Mucosa of descending colon (tissue), 3 donors: ENCODE measurements at regions of chr17 and their contacts with region 1.

Region 1: GRCh38 chr17:28125530-28126378 is 83.3 kb downstream of the NLK start:
- DNase-seq: peak in 1 of 3 donors; percentile 32
- ATAC-seq: peak; percentile 79
- H3K4me3 ChIP-seq: no peak overlapping the region
- H3K4me1 ChIP-seq: peaks cover 9% of the 10 kb centered on the region
- CTCF ChIP-seq: no peak

Region 2: DNA sequence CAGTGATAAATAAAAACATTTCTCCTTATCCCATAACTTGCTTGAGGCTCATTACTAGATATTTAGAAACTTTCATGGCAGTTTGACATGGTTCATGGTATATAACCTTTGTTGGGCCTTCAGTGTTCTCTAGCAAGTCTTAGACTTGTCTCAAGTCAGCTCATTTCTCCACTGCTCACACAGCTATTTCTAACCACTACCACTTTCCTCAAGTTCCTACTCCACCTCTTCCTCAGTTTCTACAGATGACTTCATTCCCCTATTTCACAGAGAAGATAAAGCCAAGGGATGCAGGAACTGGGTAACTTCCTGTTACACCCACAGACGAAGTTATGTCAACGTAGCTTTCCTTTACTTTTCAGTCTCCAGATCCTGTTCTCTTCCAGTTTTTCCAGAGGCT is 60.0 kb before region 1 on chr17:
- intact Hi-C with region 1: loop called in 1 of 2 experiments (anchors 10 kb)
- DNase-seq: no peak
- ATAC-seq: peak; percentile 54
- H3K4me3 ChIP-seq: no peak overlapping the region
- H3K4me1 ChIP-seq: peaks cover 9% of the 10 kb centered on the region
- CTCF ChIP-seq: no peak

Region 3: GRCh38 chr17:28196634-28197033 is 70.9 kb after region 1 on chr17:
- intact Hi-C with region 1: no loop called
- DNase-seq: no peak
- ATAC-seq: no peak
- H3K4me3 ChIP-seq: no peak overlapping the region
- H3K4me1 ChIP-seq: no peaks in the 10 kb centered on the region
- CTCF ChIP-seq: no peak